Right cardiac atrium (tissue), 5 donors: ENCODE measurements at regions of chr15 and their contacts with region 1.

Region 1: DNA sequence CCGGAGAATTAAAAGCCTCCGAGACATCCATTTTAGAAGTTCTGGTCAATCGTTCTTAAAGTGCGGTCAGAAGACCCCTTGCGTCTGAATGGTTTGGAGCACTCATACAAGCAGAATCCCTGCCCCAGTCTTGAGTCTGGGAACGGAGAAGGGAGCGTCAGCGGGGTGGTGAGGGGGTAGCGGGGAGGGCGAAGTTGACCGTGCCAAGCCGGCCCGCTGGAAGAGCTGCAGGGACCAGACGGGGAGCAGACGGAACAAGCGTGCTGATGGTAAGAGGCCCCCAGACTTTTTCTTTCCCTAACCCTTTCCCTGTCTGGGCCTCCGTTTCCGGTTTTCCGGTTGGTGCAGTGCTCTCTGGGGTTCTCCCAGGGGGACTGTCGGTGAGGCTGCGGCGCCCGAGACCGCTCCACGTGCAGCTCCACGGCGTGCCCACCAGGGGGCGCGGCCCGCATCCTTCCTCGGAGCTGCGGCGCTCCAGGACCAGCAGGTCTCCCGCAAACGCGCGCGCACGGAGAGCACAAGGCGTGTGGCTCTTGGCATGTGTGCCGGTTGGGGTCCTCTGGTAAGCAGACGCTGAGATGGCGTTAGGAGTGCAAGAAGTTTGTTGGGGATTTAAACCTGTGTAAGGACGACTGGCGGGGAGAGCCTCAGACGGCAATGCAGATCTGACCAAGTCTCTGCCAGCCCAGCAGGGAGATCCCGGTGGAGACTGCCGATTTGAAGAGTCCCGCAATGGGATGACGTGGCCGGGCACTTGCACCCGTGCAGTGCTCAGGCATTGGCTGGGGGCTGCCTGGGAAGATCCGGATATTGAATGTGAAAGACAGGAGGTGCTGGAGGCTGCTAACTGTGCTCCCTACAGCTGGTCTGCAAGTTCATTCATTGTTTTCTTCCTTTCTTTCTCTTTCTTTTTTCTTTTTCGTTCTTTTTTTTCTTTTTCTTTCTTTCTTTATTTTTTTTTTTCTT is 19.2 kb upstream of the CORO2B start:
- DNase-seq: peak; percentile 82 to 94 (median 93)
- ATAC-seq: peak; percentile 91 to 94
- H3K4me3 ChIP-seq: peak overlapping the region; percentile 26
- H3K27ac ChIP-seq: no peak overlapping the region
- H3K4me1 ChIP-seq: no peaks in the 10 kb centered on the region
- H3K27me3 ChIP-seq: no peaks in the 10 kb centered on the region

Region 2: GRCh38 chr15:68672781-68673205 is 113.2 kb after region 1 on chr15:
- intact Hi-C with region 1: loop called in 3 of 4 experiments (anchors 1 to 5 kb)
- DNase-seq: no peak
- ATAC-seq: no peak
- H3K4me3 ChIP-seq: no peak overlapping the region
- H3K27ac ChIP-seq: no peak overlapping the region
- H3K4me1 ChIP-seq: peaks cover 3% of the 10 kb centered on the region
- H3K27me3 ChIP-seq: no peaks in the 10 kb centered on the region

Region 3: DNA sequence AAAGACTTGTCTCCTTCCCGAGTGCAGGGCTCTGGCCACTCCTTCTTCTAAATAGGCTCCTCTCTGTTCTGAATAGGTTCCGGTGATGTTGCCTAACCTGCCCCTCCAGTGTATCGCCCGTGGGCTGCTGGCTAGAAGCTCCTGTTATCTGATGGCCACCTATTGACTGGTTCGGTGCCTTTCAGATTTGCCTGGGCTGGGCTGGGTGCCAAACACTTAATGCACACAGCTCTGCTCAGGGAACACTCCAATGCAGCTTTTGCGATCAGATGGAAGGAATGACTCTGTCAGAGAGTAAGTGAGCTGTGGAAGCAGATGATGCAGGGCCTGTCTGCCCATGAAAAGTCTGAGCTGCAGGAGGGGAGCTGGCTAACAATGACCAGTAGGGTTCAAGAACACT is 132.1 kb after region 1 on chr15:
- intact Hi-C with region 1: no loop called
- DNase-seq: no peak
- ATAC-seq: no peak
- H3K4me3 ChIP-seq: no peak overlapping the region
- H3K27ac ChIP-seq: no peak overlapping the region
- H3K4me1 ChIP-seq: peaks cover 2% of the 10 kb centered on the region
- H3K27me3 ChIP-seq: no peaks in the 10 kb centered on the region

Region 4: DNA sequence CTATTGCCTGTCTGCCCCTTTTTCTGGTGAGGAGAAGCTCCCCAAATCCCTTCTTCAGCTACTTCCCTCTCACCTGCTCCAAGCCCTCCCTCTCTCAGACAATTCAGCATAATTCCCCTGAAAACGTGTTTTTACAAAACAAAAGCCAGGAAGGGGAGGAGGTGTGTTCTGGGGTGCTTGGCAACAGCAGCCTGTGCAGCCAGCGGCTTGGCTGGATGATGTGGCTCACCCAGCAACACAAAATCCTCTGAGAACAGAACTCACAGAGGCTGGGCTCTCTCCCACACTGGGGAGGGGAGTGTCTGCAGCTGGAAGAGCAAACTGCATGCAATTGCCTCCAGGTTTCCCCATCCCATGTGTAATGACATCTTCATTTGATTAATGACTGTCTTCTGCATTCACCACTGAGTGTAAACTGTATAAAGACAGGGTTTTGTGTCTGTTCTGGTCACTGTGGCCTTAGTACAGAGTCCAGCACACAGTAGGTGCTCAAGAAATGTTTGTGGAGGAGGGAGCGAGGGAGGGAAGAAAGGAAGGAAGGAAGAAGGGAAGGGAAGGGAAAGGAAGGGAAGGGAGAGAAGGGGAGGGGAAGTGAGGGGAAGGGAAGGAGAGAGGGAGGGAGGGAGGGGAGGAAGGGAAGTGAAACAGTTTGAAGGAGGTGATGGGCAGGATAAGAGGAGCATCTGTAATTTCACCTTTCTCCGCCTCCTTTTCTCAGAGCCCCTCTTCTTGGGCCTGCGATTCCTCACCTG is 530.7 kb after region 1 on chr15:
- intact Hi-C with region 1: no loop called
- DNase-seq: no peak
- ATAC-seq: no peak
- H3K4me3 ChIP-seq: no peak overlapping the region
- H3K27ac ChIP-seq: no peak overlapping the region
- H3K4me1 ChIP-seq: no peaks in the 10 kb centered on the region
- H3K27me3 ChIP-seq: no peaks in the 10 kb centered on the region